H1 (cell line): ENCODE measurements at regions of chr12 and their contacts with region 1.

Region 1: GRCh38 chr12:52506858-52507715 is 13.1 kb downstream of the KRT5 start:
- DNase-seq: no peak
- H3K4me3 ChIP-seq: no peak overlapping the region
- H3K27ac ChIP-seq: no peak overlapping the region
- H3K4me1 ChIP-seq: no peaks in the 10 kb centered on the region
- H3K27me3 ChIP-seq: no peaks in the 10 kb centered on the region
- CTCF ChIP-seq: peak in 2 of 3 experiments; percentile 67 to 70; a peak in 3 of 4 replicates
- EP300 ChIP-seq: no peak
- POLR2A ChIP-seq: no peak
- RAD21 ChIP-seq: peak; percentile 35 to 59

Region 2: DNA sequence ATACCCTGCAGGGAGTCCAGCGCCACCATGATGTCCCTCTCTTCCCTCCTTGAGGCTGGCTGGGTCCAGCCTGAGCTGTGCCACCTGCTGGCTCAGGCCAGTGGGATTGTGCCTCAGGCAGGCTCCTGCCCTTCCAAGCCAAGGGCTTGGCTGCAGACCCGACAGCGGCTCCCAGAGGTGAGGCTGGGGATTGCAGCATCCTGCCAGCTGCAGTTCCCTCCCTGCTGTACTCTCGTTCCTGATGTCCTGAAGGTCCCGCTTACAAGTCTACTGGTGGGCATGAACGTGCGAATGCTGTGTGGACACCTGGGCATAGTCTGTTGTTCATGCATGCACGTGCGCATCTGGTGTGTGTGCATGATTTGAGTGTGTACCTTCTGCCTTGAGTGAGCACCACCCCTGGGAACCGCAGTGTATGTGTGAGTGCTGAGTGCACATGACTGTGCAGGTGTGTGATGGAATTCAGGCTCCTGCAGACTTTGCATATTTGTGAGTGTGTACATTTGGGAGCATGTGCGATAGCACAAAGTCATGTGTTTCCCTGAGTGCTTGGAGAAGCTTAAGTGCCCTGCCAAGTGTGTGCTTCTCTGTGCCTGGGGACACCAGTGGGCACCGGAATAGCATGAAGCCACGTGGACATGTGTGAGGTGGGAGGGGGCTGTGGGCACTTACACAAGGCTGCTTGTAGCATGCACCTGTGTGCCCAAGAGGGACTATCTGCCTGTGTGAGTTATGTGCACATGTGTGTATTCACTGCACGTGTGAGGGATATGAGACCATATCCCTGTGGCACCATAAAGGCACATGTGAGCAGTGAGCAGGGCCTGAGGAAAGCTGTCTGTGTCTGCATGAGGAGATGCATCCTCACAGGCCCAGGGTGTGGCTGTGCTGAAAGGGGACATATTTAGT is 293.3 kb before region 1 on chr12:
- CTCF ChIA-PET with region 1: no interaction called
- POLR2A ChIA-PET with region 1: no interaction called
- DNase-seq: peak; percentile 85 to 99
- H3K4me3 ChIP-seq: no peak overlapping the region
- H3K27ac ChIP-seq: no peak overlapping the region
- H3K4me1 ChIP-seq: peaks cover 0 to 4% (median under 1%) of the 10 kb centered on the region in 4 experiments; a peak in 4 of 7 replicates
- H3K27me3 ChIP-seq: no peaks in the 10 kb centered on the region
- CTCF ChIP-seq: peak; percentile 94 to 100 (median 99)
- EP300 ChIP-seq: no peak
- POLR2A ChIP-seq: no peak
- RAD21 ChIP-seq: peak; percentile 91 to 95

Region 3: GRCh38 chr12:52416383-52416750 is 90.7 kb before region 1 on chr12:
- CTCF ChIA-PET with region 1: interaction called, 20 read pairs
- POLR2A ChIA-PET with region 1: no interaction called
- DNase-seq: no peak
- H3K4me3 ChIP-seq: no peak overlapping the region
- H3K27ac ChIP-seq: no peak overlapping the region
- H3K4me1 ChIP-seq: no peaks in the 10 kb centered on the region
- H3K27me3 ChIP-seq: no peaks in the 10 kb centered on the region
- CTCF ChIP-seq: no peak
- EP300 ChIP-seq: no peak
- POLR2A ChIP-seq: no peak
- RAD21 ChIP-seq: no peak

Region 4: GRCh38 chr12:52495389-52495788 is 11.7 kb before region 1 on chr12:
- CTCF ChIA-PET with region 1: interaction called, 29 read pairs
- POLR2A ChIA-PET with region 1: interaction called, 3 read pairs
- DNase-seq: peak in 1 of 2 experiments; percentile 58
- H3K4me3 ChIP-seq: no peak overlapping the region
- H3K27ac ChIP-seq: no peak overlapping the region
- H3K4me1 ChIP-seq: peaks cover 5 to 10% (median 8%) of the 10 kb centered on the region in 4 experiments; a peak in 6 of 7 replicates
- H3K27me3 ChIP-seq: no peaks in the 10 kb centered on the region; a peak in 1 of 7 replicates
- CTCF ChIP-seq: no peak
- EP300 ChIP-seq: no peak
- POLR2A ChIP-seq: no peak
- RAD21 ChIP-seq: peak in 1 of 2 experiments; percentile 28; a peak in 1 of 4 replicates

Region 5: GRCh38 chr12:52522346-52523011 is 15.4 kb after region 1 on chr12:
- CTCF ChIA-PET with region 1: interaction called, 29 read pairs
- POLR2A ChIA-PET with region 1: interaction called, 3 read pairs
- DNase-seq: peak in 1 of 2 experiments; percentile 27
- H3K4me3 ChIP-seq: no peak overlapping the region
- H3K27ac ChIP-seq: no peak overlapping the region
- H3K4me1 ChIP-seq: peaks cover 0 to 1% (median 0%) of the 10 kb centered on the region in 4 experiments; a peak in 1 of 7 replicates
- H3K27me3 ChIP-seq: no peaks in the 10 kb centered on the region; a peak in 1 of 7 replicates
- CTCF ChIP-seq: no peak
- EP300 ChIP-seq: no peak
- POLR2A ChIP-seq: no peak
- RAD21 ChIP-seq: no peak

Region 6: DNA sequence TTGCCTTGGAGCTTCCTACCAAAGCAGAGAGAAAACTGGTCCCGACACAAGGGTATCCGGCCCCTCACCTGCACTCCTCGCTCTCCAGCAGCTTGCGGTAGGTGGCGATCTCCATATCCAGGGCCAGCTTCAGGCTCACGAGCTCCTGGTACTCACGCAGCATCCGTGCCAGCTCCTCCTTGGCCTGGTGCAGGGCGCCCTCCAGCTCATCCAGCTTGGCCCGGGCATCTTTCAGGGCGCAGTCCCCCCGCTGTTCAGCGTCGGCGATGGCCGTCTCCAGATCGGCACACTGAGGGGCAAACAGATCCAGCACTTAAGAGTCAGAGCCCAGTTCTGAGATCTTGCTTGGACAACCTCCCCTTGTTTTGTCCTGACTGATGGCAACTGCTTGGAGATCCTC is 80.5 kb after region 1 on chr12:
- CTCF ChIA-PET with region 1: no interaction called
- POLR2A ChIA-PET with region 1: no interaction called
- DNase-seq: no peak
- H3K4me3 ChIP-seq: no peak overlapping the region
- H3K27ac ChIP-seq: no peak overlapping the region
- H3K4me1 ChIP-seq: no peaks in the 10 kb centered on the region
- H3K27me3 ChIP-seq: no peaks in the 10 kb centered on the region; a peak in 1 of 7 replicates
- CTCF ChIP-seq: peak; percentile 32 to 44 (median 43); a peak in 3 of 4 replicates
- EP300 ChIP-seq: no peak
- POLR2A ChIP-seq: no peak
- RAD21 ChIP-seq: peak; percentile 24 to 37; a peak in 3 of 4 replicates